Lower leg skin (tissue), 4 donors: ENCODE measurements at regions of chr1 and their contacts with region 1.

Region 1: GRCh38 chr1:23539698-23540266 is 8.7 kb upstream of the E2F2 start:
- DNase-seq: peak; percentile 85 to 97
- H3K4me3 ChIP-seq: no peak overlapping the region
- CTCF ChIP-seq: peak in 1 of 3 donors; percentile 86
- POLR2A ChIP-seq: no peak

Region 2: DNA sequence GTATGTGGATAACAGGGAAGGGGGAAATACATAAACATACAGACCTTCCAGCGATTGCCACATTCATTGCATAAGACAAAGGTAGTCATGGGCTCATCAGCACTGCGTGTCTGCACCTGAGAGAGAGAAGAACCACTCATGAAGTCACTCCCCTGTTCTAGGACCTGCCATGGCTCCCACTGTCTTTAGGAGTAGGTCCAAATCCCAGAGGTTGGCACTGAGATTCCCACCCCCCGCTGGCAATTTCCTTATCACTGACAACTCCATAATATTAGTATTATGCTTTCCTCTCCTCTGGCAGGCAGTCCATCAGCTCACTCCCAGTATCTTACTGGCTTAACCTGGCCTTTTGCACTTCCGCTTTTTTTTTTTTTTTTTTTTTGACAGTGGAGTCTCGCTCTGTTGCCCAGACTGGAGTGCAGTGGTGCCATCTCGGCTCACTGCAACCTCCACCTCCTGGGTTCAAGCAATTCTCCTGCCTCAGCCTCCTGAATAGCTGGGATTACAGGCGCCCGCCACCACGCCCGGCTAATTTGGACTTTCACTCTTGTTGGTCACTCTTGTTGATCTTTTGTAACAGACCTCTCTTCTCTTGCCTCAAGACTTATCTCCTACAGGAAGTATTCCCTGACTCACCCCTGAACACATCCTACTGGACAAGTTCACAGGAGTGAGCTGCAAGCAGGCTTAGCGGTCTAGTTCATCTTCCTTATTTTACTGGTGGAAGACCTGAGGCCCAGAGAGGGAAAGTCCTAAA is 155.3 kb before region 1 on chr1:
- intact Hi-C with region 1: no loop called
- DNase-seq: no peak
- H3K4me3 ChIP-seq: no peak overlapping the region
- CTCF ChIP-seq: no peak
- POLR2A ChIP-seq: no peak

Region 3: DNA sequence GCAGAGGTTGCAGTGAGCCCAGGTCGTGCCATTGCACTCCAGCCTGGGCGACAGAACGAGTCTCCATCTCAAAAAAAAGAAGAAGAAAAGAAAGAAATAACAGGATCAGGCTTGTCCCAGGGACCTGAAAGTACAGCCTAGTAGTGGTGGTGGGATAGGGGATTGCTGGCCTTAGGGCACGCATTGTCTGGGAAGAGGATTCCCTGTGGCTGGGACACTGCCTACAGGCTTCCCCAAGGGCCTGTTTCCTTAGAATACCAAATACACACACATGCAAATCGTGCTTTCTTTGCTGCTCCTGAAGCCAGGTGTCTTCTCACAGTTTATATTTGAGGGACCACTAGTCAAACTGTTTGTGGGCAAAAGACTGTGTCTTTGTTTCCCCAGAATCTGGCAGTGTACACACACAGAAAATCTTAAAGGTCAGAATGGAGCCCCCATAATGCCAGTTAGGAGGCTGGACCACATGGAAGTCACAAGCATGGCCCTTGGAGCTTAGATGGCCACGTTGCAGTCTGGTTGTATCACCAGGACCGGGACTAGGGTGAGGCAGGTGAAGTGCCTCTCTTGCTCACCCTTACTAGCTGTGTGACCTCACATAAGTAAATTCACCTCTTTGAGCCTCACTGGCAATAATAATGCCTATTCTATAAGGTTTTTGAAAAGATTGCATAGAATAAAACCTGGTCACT is 43.1 kb before region 1 on chr1:
- intact Hi-C with region 1: loop called (anchors 5 kb)
- DNase-seq: no peak
- H3K4me3 ChIP-seq: no peak overlapping the region
- CTCF ChIP-seq: no peak
- POLR2A ChIP-seq: no peak

Region 4: DNA sequence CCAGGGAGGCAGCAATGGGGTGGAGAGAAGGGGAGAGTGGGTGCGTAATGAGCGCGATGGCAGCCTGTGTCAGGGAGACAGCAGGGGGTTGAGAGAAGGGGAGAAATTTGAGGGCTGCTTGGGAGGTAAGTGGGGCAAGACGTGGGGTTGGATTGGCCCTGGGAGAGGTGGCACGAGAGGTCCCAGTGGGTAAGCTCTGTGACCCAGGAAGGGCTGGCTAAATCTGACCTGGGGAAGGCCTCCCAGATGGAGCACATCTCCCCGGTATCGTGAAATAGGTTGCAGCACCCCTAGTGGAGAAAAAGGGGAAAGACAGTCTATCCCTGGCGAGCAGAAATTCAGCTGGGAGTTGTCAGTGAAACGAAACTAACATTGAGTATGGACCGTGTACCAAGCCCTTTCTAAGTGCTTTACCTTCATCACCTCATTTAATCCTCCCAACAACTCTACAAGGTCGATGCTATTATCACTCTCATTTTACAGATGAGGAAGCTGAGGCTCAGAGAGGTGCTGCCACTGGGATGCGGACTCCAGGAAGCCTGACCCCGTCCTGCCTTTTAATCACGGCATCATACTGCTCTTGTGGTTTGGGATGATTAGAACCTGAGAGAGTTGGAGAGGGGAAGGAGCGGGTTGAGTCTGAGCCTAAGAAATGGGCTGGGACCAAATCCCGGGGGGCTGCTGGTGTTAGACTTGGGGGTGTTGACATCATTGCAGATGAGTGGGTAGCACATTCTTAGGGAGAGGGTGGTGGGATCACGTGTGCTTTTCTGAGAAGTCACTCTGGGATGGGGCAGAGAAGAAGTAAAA is 95.3 kb after region 1 on chr1:
- intact Hi-C with region 1: loop called (anchors 5 kb)
- DNase-seq: peak in 1 of 2 donors; percentile 62
- H3K4me3 ChIP-seq: no peak overlapping the region
- CTCF ChIP-seq: peak in 1 of 3 donors; percentile 88
- POLR2A ChIP-seq: no peak

Region 5: GRCh38 chr1:23682946-23683345 is 143.2 kb after region 1 on chr1:
- intact Hi-C with region 1: no loop called
- DNase-seq: no peak
- H3K4me3 ChIP-seq: no peak overlapping the region
- CTCF ChIP-seq: no peak
- POLR2A ChIP-seq: no peak

Region 6: DNA sequence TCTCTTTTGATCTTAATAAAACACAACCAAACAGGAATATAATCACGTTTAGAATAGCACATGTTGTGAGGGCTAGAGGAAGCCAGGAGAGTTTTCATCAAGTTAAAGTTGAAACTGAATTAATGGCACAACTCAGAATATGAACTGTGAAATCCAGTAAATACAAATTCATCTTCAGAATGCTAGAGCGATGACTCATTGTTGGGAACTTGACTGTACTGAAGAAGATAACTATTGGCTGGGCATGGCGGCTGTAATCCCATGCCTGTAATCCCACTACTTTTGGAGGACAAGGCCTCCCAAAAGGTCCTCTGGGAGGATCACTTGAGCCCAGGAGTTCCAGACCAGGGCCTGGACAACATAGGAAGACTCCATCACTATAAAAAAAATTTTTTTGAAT is 1683.7 kb after region 1 on chr1:
- intact Hi-C with region 1: no loop called
- DNase-seq: no peak
- H3K4me3 ChIP-seq: no peak overlapping the region
- CTCF ChIP-seq: no peak
- POLR2A ChIP-seq: no peak